Endothelial cell of umbilical vein (primary cell): ENCODE measurements at regions of chr12 and their contacts with region 1.

Region 1: DNA sequence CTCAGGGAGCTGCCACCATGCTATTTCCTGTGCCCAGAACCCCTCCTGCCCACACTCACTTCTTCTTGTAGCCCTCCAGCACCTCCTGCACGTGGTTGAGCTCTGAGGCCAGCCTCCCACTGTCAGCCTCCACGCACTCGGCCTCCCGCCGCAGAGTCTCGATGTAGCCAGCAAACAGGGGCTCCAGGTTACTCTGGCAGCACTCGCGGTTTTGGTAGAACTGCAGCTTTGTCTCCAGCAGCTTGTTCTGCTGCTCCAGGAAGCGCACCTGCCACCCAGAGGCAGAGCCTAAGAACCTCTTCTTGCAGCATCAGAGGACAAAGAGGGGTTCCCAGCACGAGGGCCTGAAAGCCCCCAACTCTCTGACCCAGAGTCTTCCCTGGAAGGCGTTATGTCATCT is 2.1 kb downstream of the KRT83 start:
- DNase-seq: no peak
- H3K4me3 ChIP-seq: no peak overlapping the region
- H3K27ac ChIP-seq: no peak overlapping the region
- H3K4me1 ChIP-seq: no peaks in the 10 kb centered on the region
- H3K27me3 ChIP-seq: peaks cover 28 to 41% of the 10 kb centered on the region in 2 experiments
- CTCF ChIP-seq: no peak
- POLR2A ChIP-seq: no peak

Region 2: DNA sequence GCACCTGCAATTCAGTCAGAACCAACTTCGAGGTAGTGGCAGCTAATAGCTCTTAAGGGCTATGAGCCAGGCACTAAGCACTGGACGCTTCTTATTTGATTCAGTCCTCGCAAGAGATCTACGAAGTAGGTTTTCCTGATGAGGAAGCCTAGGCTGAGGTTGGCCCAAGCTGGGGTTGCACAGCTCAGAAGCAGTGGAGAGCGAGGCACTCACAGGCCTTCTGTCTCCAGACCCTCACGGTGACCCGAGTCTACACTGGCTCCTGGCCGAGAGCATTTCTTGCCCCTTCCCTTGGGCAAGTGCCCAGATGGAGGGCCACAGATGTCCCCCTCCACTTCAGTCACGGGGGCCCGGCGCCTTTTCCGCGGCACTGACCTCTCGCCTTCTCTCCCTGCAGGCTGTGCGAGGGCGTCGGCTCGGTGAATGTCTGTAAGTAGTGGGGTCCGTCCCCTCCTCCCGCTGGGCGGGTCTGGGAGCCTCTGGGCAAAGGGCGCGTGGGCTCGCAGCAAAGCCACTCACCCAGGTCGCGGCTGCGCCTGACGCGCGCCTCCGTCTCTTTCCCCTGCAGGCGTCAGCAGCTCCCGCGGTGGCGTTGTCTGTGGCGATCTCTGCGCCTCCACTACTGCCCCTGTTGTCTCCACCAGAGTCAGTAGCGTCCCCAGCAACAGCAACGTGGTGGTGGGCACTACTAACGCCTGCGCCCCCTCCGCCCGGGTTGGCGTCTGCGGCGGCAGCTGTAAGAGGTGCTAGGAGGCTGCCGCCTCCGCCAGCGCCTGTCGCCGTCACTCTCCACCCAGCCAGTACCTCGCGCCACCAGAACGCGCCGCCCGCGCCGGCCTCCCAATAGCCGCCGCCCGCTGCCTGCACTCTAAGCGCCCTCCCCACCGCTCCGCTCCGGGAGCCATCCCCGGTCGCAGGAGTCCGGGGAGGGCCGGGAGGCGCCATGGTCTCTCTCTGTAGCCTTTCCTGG is 11.0 kb before region 1 on chr12:
- CTCF ChIA-PET with region 1: interaction called, 14 read pairs
- POLR2A ChIA-PET with region 1: no interaction called
- dilution Hi-C with region 1: no loop called
- intact Hi-C with region 1: no loop called
- DNase-seq: peak; percentile 13
- H3K4me3 ChIP-seq: no peak overlapping the region
- H3K27ac ChIP-seq: no peak overlapping the region
- H3K4me1 ChIP-seq: no peaks in the 10 kb centered on the region
- H3K27me3 ChIP-seq: peaks cover 59 to 62% of the 10 kb centered on the region in 2 experiments
- CTCF ChIP-seq: peak in 1 of 2 donors; percentile 12
- POLR2A ChIP-seq: no peak

Region 3: DNA sequence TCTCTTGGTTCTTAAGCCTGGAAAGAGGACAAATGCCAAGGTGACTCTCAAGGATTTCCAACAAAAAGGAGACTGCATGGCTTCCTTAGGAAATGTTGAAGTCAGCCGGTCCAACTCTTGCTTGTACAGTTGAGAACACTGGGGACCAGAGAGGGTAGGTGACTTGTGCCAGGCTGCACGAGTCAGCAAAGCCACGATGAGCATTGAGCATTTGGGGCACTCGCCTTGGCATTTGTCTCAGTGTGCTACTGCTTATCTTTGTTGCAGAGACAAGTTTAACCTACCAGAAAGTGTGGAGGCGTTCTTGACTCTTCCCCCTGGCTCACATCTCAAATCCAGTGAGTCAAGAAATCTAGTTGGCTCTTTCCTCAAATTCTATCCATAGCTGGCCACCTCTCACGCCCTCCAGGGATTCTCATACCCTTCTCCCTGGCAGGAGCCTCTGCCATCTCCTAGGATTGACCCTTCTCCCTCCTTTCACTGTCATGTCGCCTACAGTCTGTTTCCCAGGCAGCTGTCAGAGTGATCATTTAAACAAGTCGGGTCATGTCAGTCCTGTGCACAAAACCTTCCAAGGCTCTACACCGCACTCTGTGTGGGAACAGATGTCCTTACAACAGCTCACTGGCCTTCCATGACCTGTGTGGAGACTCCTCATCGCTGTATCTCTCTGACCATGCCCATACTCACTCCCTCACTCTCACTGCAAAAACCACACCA is 19.3 kb after region 1 on chr12:
- CTCF ChIA-PET with region 1: no interaction called
- POLR2A ChIA-PET with region 1: no interaction called
- dilution Hi-C with region 1: no loop called
- intact Hi-C with region 1: no loop called
- DNase-seq: no peak
- H3K4me3 ChIP-seq: no peak overlapping the region
- H3K27ac ChIP-seq: no peak overlapping the region
- H3K4me1 ChIP-seq: no peaks in the 10 kb centered on the region
- H3K27me3 ChIP-seq: peaks cover 13 to 14% of the 10 kb centered on the region in 2 experiments
- CTCF ChIP-seq: no peak
- POLR2A ChIP-seq: no peak

Region 4: GRCh38 chr12:52413788-52414345 is 94.8 kb after region 1 on chr12:
- CTCF ChIA-PET with region 1: no interaction called
- POLR2A ChIA-PET with region 1: no interaction called
- dilution Hi-C with region 1: no loop called
- intact Hi-C with region 1: no loop called
- DNase-seq: no peak
- H3K4me3 ChIP-seq: no peak overlapping the region
- H3K27ac ChIP-seq: no peak overlapping the region
- H3K4me1 ChIP-seq: no peaks in the 10 kb centered on the region
- H3K27me3 ChIP-seq: peaks cover 0 to 2% of the 10 kb centered on the region in 2 experiments
- CTCF ChIP-seq: no peak
- POLR2A ChIP-seq: no peak